Brain microvascular endothelial cell (primary cell): ENCODE measurements at regions of chr6 and their contacts with region 1.

Region 1: DNA sequence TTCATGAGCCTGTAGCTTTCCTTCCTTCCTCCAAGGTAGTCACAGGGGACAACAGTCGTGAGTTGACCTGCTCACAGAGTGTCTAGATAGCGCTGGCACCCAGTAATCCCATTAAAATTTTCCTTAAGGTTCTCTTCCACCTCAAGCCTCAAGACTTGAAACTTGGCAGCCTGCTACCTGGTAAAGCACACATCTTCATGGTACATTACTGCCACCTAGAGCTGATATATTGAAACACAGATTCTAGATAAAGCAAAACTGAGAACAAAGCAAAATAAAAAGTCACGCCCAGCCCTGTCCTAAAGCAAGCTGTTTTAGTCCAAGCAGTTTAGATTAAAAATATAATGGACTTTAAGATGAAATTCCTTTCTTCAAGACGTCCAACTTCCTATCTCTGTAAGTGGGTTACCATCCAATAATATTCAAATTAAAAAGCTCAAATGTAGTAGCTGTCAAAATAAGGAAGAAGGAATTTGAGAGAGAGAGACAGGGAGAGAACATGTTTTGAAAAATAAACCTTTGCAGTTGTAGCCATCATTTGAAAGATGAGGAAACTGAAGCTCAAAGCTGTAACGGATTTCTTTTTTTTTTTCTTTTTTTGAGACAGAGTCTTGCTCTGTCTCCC is 50.7 kb upstream of the CD83 start:
- DNase-seq: peak; percentile 47
- H3K4me3 ChIP-seq: no peak overlapping the region
- H3K27ac ChIP-seq: no peak overlapping the region
- H3K27me3 ChIP-seq: no peaks in the 10 kb centered on the region
- CTCF ChIP-seq: peak; percentile 56

Region 2: GRCh38 chr6:13908955-13909381 is 157.9 kb before region 1 on chr6:
- in situ Hi-C with region 1: loop called (anchors 25 kb)
- DNase-seq: peak; percentile 60
- H3K4me3 ChIP-seq: no peak overlapping the region
- H3K27ac ChIP-seq: no peak overlapping the region
- H3K27me3 ChIP-seq: no peaks in the 10 kb centered on the region
- CTCF ChIP-seq: peak; percentile 73